MCF 10A (cell line): ENCODE measurements at regions of chr19 and their contacts with region 1.

Region 1: DNA sequence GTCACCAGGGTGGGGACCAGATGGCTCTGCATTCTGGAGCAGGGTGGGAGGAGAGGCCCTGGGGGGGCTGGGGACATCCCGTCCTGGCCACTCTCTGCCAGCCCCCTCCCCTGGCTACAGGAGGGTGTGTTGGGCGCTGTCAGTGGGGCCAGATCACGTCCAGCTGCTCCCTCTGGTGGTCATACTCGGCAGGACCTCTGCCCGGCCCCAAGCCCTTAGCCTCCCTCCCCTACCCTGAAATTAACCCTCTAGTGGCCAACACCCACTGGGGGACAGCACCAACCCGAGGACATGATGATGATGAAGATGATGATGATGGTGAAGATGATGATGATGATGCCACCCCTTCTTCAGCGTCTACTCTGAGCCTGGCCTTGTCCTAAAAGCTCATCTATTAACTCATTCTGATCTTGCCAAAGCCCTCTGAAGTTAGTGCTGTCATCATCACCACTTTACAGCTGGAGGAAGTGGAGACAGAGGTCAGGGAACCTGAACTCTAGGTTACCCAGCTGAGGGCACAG is 590 bp upstream of the LGI4 start:
- DNase-seq: peak; percentile 73
- H3K4me3 Mint-ChIP-seq: no peak overlapping the region
- H3K27ac Mint-ChIP-seq: no peak overlapping the region
- H3K4me1 Mint-ChIP-seq: peaks cover 6% of the 10 kb centered on the region
- H3K27me3 Mint-ChIP-seq: peaks cover 4% of the 10 kb centered on the region
- CTCF ChIP-seq: peak; percentile 79

Region 2: DNA sequence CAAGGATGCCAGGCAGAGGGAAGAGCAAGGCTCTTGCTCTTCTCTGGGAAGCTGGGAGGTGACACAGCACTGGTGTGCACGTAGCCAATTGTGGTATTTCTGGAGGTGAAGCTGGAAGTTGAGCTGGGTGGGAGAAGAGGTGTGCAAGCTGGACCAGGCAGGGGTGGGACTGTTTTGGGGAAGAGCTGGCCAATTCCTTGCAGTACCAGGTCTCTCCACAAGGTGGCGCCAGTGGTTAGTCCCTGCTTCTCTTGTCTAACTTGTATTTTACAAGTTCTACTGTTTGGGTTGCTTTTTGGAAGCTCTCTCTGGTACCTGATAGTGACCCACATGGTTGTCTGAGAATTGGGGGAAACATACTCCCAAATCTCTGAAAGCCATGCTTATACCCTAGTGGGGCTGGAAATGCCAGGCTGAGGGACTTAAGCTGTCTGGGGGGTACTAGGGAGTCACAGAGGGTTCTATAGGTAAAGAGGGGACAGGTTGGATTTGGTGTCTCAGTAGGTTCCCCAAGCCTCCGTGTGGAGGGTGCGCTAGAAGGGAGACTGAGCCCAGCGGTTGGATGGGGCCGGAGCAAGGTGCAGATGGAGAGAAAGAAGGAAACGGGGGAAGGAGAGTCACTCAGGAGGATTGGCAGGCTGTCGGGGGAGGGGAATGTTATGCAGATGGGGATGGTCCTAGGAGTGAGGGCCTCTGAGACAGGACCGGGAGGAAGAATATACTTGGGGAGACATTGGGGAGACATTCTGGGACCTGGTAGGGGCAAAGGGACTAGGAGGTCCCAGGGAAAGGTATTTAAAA is 90.9 kb before region 1 on chr19:
- CTCF ChIA-PET with region 1: interaction called, 57 read pairs
- POLR2A ChIA-PET with region 1: no interaction called
- intact Hi-C with region 1: no loop called
- DNase-seq: peak; percentile 77
- H3K4me3 Mint-ChIP-seq: no peak overlapping the region
- H3K27ac Mint-ChIP-seq: no peak overlapping the region
- H3K4me1 Mint-ChIP-seq: peaks cover 6% of the 10 kb centered on the region
- H3K27me3 Mint-ChIP-seq: no peaks in the 10 kb centered on the region
- CTCF ChIP-seq: peak; percentile 94

Region 3: GRCh38 chr19:35098413-35099049 is 36.9 kb before region 1 on chr19:
- CTCF ChIA-PET with region 1: interaction called, 24 read pairs
- POLR2A ChIA-PET with region 1: interaction called, 3 read pairs
- intact Hi-C with region 1: no loop called
- DNase-seq: no peak
- H3K4me3 Mint-ChIP-seq: no peak overlapping the region
- H3K27ac Mint-ChIP-seq: no peak overlapping the region
- H3K4me1 Mint-ChIP-seq: peaks cover 13% of the 10 kb centered on the region
- H3K27me3 Mint-ChIP-seq: no peaks in the 10 kb centered on the region
- CTCF ChIP-seq: no peak

Region 4: DNA sequence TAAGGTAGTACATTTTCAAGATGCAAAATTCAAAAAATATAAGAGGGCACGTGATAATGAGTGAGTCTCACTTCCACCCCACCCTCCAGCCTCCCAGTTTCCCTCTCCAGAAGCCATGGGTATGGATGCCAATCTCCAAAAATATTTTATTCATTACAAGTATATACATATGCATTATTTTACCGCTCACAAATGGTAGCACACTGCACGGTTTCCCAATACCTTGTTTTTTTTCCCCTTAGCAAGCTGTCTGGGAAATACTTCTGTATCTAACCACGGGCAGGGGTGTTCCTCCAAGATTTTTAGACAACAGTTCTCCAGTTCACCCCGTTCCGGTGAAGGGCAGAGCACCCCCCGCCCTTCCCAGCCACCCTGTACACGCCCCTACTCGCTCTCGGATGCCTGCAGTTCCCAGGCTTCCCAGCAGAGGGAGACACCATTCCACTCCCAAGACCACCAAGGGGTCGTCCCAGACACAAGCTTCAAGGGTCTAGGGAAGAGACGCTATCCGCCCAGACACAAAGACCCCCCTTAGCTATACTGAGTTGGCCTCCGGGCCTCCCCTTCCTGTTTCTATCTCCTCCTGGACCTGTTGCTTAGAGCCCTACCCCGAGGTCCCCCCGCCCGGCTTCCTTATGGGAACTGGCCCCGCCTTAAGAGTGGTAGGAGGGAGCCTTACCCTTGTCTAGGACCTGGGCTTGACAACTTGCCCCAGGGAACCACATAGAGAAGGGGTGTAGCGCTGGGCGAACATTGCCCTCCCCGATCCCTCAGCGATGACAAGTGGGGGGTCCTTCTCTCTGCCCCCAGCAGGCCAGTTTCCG is 20.9 kb before region 1 on chr19:
- CTCF ChIA-PET with region 1: interaction called, 91 read pairs
- POLR2A ChIA-PET with region 1: interaction called, 21 read pairs
- intact Hi-C with region 1: loop called (anchors 1 kb)
- DNase-seq: peak; percentile 68
- H3K4me3 Mint-ChIP-seq: peak overlapping the region; percentile 53
- H3K27ac Mint-ChIP-seq: peak overlapping the region; percentile 73
- H3K4me1 Mint-ChIP-seq: peaks cover 50% of the 10 kb centered on the region
- H3K27me3 Mint-ChIP-seq: no peaks in the 10 kb centered on the region
- CTCF ChIP-seq: peak; percentile 98

Region 5: GRCh38 chr19:35162471-35163326 is 27.2 kb after region 1 on chr19:
- CTCF ChIA-PET with region 1: interaction called, 10 read pairs
- POLR2A ChIA-PET with region 1: no interaction called
- intact Hi-C with region 1: no loop called
- DNase-seq: peak; percentile 74
- H3K4me3 Mint-ChIP-seq: no peak overlapping the region
- H3K27ac Mint-ChIP-seq: peak overlapping the region; percentile 93
- H3K4me1 Mint-ChIP-seq: peaks cover 9% of the 10 kb centered on the region
- H3K27me3 Mint-ChIP-seq: no peaks in the 10 kb centered on the region
- CTCF ChIP-seq: no peak

Region 6: GRCh38 chr19:35193869-35194665 is 58.6 kb after region 1 on chr19:
- CTCF ChIA-PET with region 1: no interaction called
- POLR2A ChIA-PET with region 1: no interaction called
- intact Hi-C with region 1: no loop called
- DNase-seq: no peak
- H3K4me3 Mint-ChIP-seq: no peak overlapping the region
- H3K27ac Mint-ChIP-seq: no peak overlapping the region
- H3K4me1 Mint-ChIP-seq: no peaks in the 10 kb centered on the region
- H3K27me3 Mint-ChIP-seq: peaks cover 23% of the 10 kb centered on the region
- CTCF ChIP-seq: no peak